ENCODE measurements at regions of chr11 and their contacts with region 1.

Region 1: DNA sequence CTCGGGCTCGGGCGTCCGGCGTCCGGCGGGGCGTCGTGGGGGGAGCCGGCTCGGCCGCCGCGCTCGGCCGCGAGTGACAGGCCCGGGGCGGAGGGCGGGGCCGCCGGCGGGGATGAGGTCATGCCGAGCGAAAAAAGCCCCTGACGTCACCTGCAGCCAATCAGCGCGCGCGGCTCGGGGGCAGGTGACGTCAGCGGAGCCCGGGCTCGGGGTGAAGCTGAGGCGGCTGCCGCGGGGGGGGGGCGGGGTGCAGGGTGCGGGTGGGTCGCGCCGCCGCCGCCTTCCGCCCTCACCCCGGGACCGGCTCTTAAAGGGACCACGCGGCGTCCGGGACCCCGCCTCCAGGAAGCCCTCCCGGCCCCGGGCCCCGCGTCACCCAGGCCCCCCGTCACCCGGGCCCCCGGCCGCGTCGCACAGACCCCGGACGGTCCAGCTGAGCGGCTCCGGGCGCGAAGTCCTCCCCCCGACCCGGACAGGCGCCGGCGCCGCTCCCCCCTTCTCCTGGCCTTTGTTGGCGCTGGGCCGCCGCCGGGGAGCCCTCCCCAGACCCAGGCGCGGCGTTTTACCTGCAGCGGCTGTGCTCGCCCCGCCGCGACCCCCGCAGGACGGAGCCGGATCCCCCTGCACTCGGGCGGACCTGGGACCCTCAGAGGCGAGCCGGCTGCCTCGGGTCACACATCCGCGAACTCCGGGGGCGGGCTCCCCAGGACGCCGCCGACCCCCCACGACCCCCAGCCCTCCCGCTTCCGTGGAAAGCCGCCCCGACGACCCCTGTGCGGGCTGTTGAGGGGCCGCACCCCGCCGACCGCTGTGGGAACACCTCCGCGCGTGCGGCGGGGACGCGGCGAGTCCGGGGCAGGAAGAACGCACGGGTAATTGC is at the start of gene DUSP8:
- DNase-seq: no peak
- H3K4me3 ChIP-seq: peak within 1 kb of the TSS; percentile 69
- H3K27me3 ChIP-seq: peaks cover 2% of the 10 kb centered on the region; the same call in 1 of the 2 replicates
- CTCF ChIP-seq: no peak
- polyA plus RNA-seq, gene DUSP8: 1.9 and 3.4 TPM in 2 replicates

Region 2: GRCh38 chr11:1515082-1516060 is 57.1 kb before region 1 on chr11:
- CTCF ChIA-PET with region 1: interaction called, 12 read pairs
- POLR2A ChIA-PET with region 1: no interaction called
- DNase-seq: no peak
- H3K4me3 ChIP-seq: no peak overlapping the region
- H3K27me3 ChIP-seq: no peaks in the 10 kb centered on the region
- CTCF ChIP-seq: peak; percentile 94

Region 3: DNA sequence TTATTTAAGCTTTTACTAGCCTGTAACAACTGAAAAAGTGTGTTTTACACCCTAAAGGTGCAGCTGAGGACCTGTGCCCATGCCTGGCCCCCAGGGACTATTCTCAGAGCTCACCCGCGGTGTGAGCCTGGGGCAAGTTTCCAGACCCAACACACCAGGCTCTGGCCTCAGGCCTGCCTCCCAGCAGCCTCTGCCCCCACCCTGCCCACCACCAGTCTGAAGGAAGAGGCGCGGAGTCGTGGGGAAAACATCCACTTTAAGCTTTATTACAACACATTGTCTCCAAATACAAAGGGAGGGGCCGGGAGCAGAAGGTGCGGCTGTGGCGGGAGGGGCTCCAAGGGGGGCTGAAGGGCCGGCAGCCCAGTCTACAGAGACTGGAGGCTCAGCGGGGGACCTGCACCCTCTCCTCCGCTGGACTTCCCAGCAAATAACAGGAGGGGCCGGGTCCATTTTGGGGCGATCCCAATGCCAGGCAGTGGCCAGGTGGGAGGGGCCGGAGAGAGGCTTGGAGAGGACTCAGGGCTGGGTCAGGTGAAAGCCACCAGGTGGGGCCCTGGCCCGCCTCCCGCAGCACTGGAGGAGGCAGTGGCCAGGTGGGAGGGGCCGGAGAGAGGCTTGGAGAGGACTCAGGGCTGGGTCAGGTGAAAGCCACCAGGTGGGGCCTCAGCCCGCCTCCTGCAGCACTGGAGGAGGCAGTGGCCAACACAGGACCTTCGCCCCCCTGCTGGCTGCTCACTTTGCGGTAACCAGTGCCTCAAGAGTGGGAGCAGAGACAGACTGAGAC is 18.4 kb before region 1 on chr11:
- CTCF ChIA-PET with region 1: interaction called, 301 read pairs
- POLR2A ChIA-PET with region 1: no interaction called
- DNase-seq: no peak
- H3K4me3 ChIP-seq: no peak overlapping the region
- H3K27me3 ChIP-seq: peaks cover 2% of the 10 kb centered on the region; the same call in 1 of the 2 replicates
- CTCF ChIP-seq: no peak

Region 4: DNA sequence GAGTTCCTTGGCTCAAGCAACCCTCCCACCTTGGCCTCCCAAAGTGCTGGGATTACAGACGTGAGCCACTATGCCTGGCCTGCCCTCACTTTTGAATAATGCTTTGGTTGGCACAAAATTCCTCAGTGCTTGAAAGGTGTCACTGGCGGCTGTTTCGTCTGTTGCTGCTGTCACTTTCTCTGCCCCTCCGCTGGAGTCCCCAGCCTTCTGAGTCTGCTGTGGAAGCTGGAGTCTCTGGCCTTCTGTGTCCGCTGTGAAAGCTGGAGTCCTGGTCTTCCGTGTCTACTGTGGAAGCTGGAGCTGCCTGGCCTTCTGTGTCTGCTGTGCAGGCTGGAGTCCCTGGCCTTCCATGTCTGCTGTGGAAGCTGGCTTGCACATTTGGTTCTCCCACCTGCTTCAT is 17.6 kb after region 1 on chr11:
- CTCF ChIA-PET with region 1: interaction called, 31 read pairs
- POLR2A ChIA-PET with region 1: no interaction called
- DNase-seq: no peak
- H3K4me3 ChIP-seq: no peak overlapping the region
- H3K27me3 ChIP-seq: peaks cover 6% of the 10 kb centered on the region
- CTCF ChIP-seq: no peak

Region 5: GRCh38 chr11:1628506-1629325 is 56.3 kb after region 1 on chr11:
- CTCF ChIA-PET with region 1: interaction called, 14 read pairs
- POLR2A ChIA-PET with region 1: no interaction called
- DNase-seq: no peak
- H3K4me3 ChIP-seq: no peak overlapping the region
- H3K27me3 ChIP-seq: peaks cover 20% of the 10 kb centered on the region
- CTCF ChIP-seq: peak; percentile 94

Measured in BJ (cell line).